ENCODE measurements at regions of chr15 and their contacts with region 1.

Region 1: DNA sequence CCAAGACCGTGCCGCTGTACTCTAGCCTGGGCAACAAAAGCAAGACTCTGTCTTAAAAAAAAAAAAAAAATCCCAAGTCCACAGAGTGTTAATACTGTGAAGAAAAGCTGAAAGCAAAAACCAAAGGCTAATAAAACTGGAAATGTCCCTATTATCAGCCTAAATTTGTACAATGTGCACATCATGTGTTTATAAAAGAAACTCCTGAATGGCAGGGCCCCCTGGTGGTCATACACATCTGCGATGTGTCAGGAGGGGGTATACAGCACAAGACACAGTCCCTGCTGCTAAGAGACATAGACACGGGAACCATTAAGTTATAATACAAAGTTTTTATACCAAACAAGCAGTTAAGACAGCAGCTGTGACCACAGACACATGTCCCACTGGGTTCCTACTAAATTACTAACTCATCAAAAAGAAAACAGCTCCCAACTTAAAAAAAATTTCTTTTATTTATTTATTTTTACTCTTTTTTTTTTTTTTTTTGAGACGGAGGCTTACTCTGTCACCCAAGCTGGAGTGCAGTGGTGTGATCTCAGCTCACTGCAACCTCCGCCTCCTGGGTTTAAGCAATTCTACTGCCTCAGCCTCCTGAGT is 31.0 kb downstream of the IDH2 start:
- DNase-seq: peak; percentile 81
- H3K4me3 ChIP-seq: no peak overlapping the region
- H3K27ac ChIP-seq: peak overlapping the region; percentile 35 to 50
- H3K4me1 ChIP-seq: peaks cover 3% of the 10 kb centered on the region
- H3K27me3 ChIP-seq: no peaks in the 10 kb centered on the region
- CTCF ChIP-seq: peak; percentile 72 to 89 (median 87)
- POLR2A ChIP-seq: no peak

Region 2: GRCh38 chr15:89760303-89761008 is 310.9 kb before region 1 on chr15:
- intact Hi-C with region 1: loop called (anchors 10 kb)
- DNase-seq: peak; percentile 74
- H3K4me3 ChIP-seq: no peak overlapping the region
- H3K27ac ChIP-seq: peak overlapping the region; percentile 83 to 92
- H3K4me1 ChIP-seq: peaks cover 6% of the 10 kb centered on the region
- H3K27me3 ChIP-seq: no peaks in the 10 kb centered on the region
- CTCF ChIP-seq: peak; percentile 96 to 97 (median 96)
- POLR2A ChIP-seq: no peak

Region 3: GRCh38 chr15:89912674-89913396 is 158.5 kb before region 1 on chr15 and contains the start of gene ARPIN:
- intact Hi-C with region 1: loop called (anchors 2 kb)
- DNase-seq: peak; percentile 37
- H3K4me3 ChIP-seq: peak within 1 kb of the TSS; percentile 65 to 78
- H3K27ac ChIP-seq: peak within 1 kb of the TSS; percentile 84 to 87
- H3K4me1 ChIP-seq: no peaks in the 10 kb centered on the region
- H3K27me3 ChIP-seq: no peaks in the 10 kb centered on the region
- CTCF ChIP-seq: no peak
- POLR2A ChIP-seq: no peak
- total RNA-seq, gene ARPIN: 18.7 to 39.5 TPM